GM10248 (cell line): ENCODE measurements at regions of chr5 and their contacts with region 1.

Region 1: DNA sequence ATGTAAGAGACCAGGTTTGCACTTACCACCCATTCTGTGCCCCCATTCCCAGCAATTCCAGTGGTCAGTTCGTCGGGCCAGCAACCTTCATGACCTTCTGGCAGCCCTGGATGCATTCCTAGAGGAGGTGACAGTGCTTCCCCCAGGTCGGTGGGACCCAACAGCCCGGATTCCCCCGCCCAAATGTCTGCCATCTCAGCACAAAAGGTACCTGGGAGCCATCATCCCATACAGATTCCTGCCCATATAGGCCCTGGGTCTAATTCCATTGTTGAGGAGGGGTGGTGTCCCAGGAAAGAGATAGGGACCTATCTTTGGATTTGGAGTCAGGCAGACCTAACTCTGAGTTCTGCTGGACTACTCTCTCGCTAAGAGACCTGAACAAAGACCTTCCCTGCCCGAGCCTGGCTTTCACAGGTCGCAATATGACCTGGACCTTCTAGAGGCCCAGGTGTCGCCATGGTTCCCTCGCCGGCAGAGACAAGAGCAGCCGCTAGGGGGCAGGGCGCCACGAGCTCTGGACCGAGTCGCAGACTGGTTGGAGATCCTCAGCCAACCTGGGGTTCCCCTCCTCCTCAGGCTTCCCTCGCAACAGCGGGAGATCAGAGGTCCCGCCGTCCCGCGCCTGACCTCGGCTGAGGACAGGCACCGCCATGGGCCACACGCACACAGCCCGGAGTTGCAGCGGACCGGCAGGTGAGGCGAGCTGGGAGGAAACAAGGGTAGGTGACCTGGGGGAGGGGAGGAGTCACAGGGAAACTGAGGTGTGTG is 3.1 kb downstream of the SLC4A9 start:
- DNase-seq: peak; percentile 92
- CTCF ChIP-seq: peak; percentile 99

Region 2: GRCh38 chr5:140381972-140382371 is 18.9 kb after region 1 on chr5:
- CTCF ChIA-PET with region 1: interaction called, 17 read pairs
- POLR2A ChIA-PET with region 1: no interaction called
- DNase-seq: no peak
- CTCF ChIP-seq: no peak

Region 3: GRCh38 chr5:140633021-140633482 is 270.0 kb after region 1 on chr5 and contains the start of gene CD14:
- CTCF ChIA-PET with region 1: interaction called, 10 read pairs
- POLR2A ChIA-PET with region 1: no interaction called
- DNase-seq: no peak
- CTCF ChIP-seq: no peak

Region 4: GRCh38 chr5:140718241-140718580 is 355.2 kb after region 1 on chr5:
- CTCF ChIA-PET with region 1: interaction called, 28 read pairs
- POLR2A ChIA-PET with region 1: interaction called, 3 read pairs
- DNase-seq: no peak
- CTCF ChIP-seq: no peak